ENCODE measurements at regions of chr10 and their contacts with region 1.

Region 1: DNA sequence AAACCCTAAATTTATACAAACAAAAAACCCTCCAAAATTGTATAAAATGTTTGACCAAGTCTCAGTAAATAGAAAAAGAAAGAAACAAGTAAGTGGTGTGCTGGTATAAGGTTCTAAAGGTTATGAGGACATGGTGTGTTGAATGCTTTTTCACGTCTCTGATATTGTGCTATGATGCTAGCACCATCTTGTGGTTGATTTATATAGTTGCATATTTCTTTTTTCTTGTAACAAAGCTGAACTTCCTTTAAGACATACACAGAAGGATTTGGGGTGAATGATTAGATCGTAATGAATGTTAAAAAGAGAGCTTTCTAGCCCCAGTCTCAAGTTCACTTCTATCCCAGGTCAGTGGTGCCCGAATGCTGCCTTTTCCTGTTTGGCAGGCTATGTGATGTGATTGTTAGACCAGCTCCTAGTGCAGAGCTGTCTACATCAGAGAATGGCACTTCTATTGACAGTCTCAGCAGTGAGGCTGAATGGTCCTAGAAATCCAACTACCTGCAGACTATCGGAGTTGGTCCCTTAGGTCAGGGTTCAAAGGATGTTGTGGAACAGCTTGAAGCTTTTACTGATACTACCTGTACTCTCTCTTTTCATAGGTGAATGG is 25.0 kb downstream of the VTI1A start:
- DNase-seq: no peak
- H3K4me3 Mint-ChIP-seq: no peak overlapping the region
- H3K27ac Mint-ChIP-seq: no peak overlapping the region
- H3K4me1 Mint-ChIP-seq: no peaks in the 10 kb centered on the region
- H3K27me3 Mint-ChIP-seq: no peaks in the 10 kb centered on the region

Region 2: DNA sequence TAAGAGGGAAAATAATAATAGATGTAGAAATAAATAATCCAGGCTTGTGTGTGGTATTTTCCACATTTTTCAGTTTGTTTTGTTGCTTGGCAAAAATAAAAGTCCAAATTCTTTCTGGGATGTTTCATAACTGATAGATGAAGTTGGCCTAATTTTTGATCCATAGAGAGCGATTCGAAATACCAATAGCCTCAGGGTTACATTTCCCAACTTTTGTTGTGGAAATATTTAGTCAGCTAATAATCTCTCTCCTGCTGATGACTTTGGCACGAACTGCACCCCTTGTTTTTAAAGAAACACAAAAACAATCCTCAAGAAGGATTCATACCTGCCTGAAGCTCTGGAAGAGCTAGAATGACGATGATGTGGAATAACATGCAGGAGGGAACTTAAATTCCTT is 912.0 kb before region 1 on chr10:
- intact Hi-C with region 1: no loop called
- DNase-seq: no peak
- H3K4me3 Mint-ChIP-seq: no peak overlapping the region
- H3K27ac Mint-ChIP-seq: no peak overlapping the region
- H3K4me1 Mint-ChIP-seq: no peaks in the 10 kb centered on the region
- H3K27me3 Mint-ChIP-seq: peaks cover 2% of the 10 kb centered on the region

Region 3: GRCh38 chr10:112314822-112315474 is 157.0 kb before region 1 on chr10:
- intact Hi-C with region 1: loop called (anchors 2 kb)
- DNase-seq: peak; percentile 50
- H3K4me3 Mint-ChIP-seq: no peak overlapping the region
- H3K27ac Mint-ChIP-seq: no peak overlapping the region
- H3K4me1 Mint-ChIP-seq: peaks cover 4% of the 10 kb centered on the region
- H3K27me3 Mint-ChIP-seq: peaks cover 18% of the 10 kb centered on the region

Region 4: DNA sequence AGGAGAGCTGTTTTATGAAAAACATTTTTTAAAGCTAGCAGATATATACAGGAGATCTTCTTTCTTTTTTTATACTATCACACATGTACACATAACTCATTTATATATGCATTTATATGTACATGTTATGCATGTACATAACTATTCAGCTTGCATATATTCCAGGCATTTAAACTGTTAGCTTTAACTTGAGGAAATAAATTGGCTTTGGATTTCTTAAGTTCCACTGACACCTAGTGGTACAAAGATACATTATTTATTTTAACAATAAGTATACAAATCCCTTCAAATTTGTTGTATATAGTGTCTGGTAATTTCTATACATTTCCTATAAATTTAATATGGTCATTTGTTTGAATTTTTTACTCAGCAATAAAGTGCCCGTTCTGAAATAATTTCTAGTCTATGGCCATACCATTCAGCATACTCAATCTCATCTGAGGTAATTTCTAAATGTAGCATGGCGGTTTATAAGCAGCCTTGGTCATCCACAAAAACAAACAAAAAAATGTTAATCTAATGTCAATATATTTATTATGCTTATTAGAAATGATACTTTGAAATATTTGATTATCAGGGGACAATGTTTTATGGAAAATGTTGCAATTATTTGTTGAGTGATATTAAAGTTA is 36.9 kb before region 1 on chr10:
- intact Hi-C with region 1: loop called (anchors 5 kb)
- DNase-seq: no peak
- H3K4me3 Mint-ChIP-seq: no peak overlapping the region
- H3K27ac Mint-ChIP-seq: no peak overlapping the region
- H3K4me1 Mint-ChIP-seq: peaks cover 5% of the 10 kb centered on the region
- H3K27me3 Mint-ChIP-seq: no peaks in the 10 kb centered on the region

Region 5: GRCh38 chr10:112446855-112447711 is 24.9 kb before region 1 on chr10 and contains the starts of genes VTI1A and ZDHHC6:
- intact Hi-C with region 1: loop called (anchors 1 kb)
- DNase-seq: peak; percentile 80
- H3K4me3 Mint-ChIP-seq: peak within 1 kb of the TSS; percentile 93
- H3K27ac Mint-ChIP-seq: peak within 1 kb of the TSS; percentile 93
- H3K4me1 Mint-ChIP-seq: peaks cover 47% of the 10 kb centered on the region
- H3K27me3 Mint-ChIP-seq: no peaks in the 10 kb centered on the region
- total RNA-seq, gene VTI1A: 39.4 and 39.9 TPM in 2 replicates
- total RNA-seq, gene ZDHHC6: 51.9 and 52.6 TPM in 2 replicates

Region 6: DNA sequence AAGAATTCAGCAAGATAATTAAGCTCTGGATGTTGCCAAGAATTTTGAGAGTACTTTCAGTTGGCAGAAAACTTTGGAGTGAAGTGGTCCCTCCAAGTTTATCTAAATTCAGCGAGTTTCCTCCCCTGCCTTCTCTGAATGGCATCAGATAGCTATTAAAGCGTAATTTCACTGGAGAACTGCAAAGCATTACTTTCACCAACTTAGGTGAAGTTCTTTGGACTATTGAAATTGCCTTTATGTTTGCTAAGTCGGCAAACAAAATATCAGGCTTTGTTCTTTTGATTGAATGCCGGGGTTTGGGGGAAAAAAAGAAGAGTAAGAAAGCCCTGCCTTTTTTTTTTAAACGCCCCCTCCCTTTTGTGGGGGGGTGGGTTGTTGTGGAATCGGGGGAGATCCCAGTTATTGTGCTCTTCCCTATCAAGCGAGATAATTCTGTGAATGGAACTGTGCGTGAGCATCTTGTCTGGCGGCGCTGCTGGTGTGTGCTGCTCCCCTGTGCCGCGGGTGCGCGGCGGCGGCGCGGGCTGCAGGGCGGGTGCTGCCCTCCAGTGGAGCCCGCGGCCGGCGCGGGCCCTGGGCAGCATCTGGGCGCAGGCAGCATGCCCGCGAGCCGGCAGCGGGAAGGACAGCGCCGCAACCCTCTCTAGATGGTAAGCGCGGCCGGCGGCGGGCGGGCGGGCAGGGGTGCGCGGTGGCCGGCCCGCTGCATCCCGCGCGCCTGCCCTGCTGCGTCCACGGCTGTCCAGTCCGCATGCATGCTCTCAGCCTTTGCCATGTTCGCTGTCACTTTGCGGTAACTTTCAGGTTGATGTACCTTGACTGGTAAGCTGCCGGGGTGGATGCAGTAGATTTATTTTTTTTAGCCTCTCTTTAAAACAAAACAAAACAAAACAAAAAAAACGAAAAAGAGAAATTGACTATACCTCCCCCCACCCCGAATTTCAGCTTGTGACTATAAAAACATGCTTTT is 654.5 kb after region 1 on chr10:
- intact Hi-C with region 1: loop called (anchors 5 kb)
- DNase-seq: no peak
- H3K4me3 Mint-ChIP-seq: no peak overlapping the region
- H3K27ac Mint-ChIP-seq: no peak overlapping the region
- H3K4me1 Mint-ChIP-seq: no peaks in the 10 kb centered on the region
- H3K27me3 Mint-ChIP-seq: peaks cover 35% of the 10 kb centered on the region